Endothelial cell of umbilical vein (primary cell): ENCODE measurements at regions of chr5 and their contacts with region 1.

Region 1: DNA sequence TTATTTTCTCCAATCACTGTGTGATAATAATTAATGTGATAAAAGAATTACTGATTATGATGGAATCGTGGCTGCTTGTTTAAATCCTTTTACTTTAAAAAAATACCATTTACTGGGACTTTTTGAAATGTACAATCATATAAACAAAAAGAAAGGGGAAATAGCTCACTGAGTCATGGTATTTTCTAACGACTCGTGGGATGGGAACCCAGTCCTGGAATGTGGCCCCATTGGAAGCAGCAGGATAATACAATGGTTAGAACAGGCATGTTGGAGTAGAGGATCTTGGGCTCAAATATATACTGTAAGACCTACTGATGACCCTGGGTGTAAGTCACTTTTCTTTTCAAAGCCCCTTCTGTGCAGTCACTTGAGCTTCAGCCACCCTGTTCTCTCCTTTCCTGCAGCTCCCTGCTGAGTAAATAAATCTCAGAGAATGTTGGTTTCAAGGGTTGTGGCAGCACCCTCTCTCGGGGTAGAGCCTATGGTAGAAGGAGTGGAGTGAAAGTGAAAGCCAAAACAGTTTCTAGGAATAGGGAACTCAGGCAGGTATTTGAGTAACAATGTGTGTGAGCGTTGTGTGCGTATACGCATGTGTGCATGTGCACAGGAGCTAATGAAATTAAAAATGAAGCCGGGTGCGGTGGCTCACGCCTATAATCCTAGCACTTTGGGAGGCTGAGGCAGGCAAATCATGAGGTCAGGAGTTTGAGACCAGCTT is 40.8 kb upstream of the LARP1 start:
- DNase-seq: peak; percentile 64
- H3K4me3 ChIP-seq: no peak overlapping the region
- H3K27ac ChIP-seq: peak overlapping the region; percentile 25
- H3K4me1 ChIP-seq: peaks cover 11% of the 10 kb centered on the region
- H3K27me3 ChIP-seq: no peaks in the 10 kb centered on the region
- CTCF ChIP-seq: no peak
- POLR2A ChIP-seq: no peak

Region 2: GRCh38 chr5:154654486-154655371 is 59.7 kb before region 1 on chr5:
- CTCF ChIA-PET with region 1: no interaction called
- POLR2A ChIA-PET with region 1: no interaction called
- dilution Hi-C with region 1: no loop called
- intact Hi-C with region 1: loop called (anchors 2 kb)
- DNase-seq: peak; percentile 79
- H3K4me3 ChIP-seq: peak overlapping the region in 1 of 3 experiments; percentile 50
- H3K27ac ChIP-seq: peak overlapping the region; percentile 86
- H3K4me1 ChIP-seq: peaks cover 22% of the 10 kb centered on the region
- H3K27me3 ChIP-seq: no peaks in the 10 kb centered on the region
- CTCF ChIP-seq: no peak
- POLR2A ChIP-seq: peak; percentile 57

Region 3: DNA sequence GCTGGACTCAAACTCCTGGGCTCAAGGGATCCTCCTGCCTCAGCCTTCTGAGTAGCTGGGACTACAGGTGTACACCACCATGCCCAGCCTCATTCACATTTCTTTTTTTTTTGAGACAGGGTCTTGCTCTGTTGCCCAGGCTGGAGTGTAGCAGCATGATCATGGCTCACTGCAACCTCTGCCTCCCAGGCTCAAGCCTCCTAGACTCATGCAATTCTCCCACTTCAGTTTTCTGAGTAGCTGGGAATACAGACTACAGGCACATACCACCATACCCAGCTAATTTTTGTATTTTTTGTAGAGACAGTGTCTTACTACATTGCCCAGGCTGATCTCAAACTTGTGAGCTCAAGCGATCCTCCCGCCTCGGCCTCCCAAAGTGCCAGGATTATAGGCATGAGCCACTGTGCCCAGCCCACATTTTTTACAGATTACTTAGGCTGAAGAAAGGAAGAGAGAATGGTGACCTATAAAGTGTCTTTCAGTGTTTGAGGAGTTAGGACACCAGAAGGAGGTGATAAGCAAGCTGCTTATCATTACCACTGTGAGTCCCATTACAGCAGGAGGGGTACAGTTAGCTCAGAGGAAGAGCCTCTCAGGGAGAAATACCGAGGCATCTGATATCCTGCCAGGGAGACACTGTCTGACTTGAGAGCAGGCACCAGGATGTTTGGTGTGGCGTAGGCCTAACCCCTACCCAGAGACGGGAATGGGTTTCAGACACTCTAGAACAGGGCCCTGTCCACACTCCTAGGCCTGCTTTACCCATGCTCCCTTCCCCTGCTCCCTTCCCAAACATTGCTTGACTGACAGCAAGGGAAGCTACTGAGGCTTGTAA is 126.2 kb after region 1 on chr5:
- CTCF ChIA-PET with region 1: no interaction called
- POLR2A ChIA-PET with region 1: no interaction called
- dilution Hi-C with region 1: no loop called
- intact Hi-C with region 1: no loop called
- DNase-seq: no peak
- H3K4me3 ChIP-seq: no peak overlapping the region
- H3K27ac ChIP-seq: no peak overlapping the region
- H3K4me1 ChIP-seq: peaks cover 9% of the 10 kb centered on the region
- H3K27me3 ChIP-seq: no peaks in the 10 kb centered on the region
- CTCF ChIP-seq: no peak
- POLR2A ChIP-seq: no peak